ENCODE measurements at regions of chr9 and their contacts with region 1.

Region 1: GRCh38 chr9:33167046-33167808 is at the start of gene B4GALT1:
- DNase-seq: peak; percentile 81 to 97 (median 90)
- ATAC-seq: peak; percentile 86
- H3K4me3 ChIP-seq: peak within 1 kb of the TSS; percentile 68
- H3K4me3 Mint-ChIP-seq: peak within 1 kb of the TSS; percentile 87 to 97 (median 95)
- H3K27ac ChIP-seq: peak within 1 kb of the TSS; percentile 91
- H3K27ac Mint-ChIP-seq: peak within 1 kb of the TSS; percentile 91 to 100 (median 99)
- H3K4me1 ChIP-seq: peaks cover 43 to 45% of the 10 kb centered on the region in 2 donors
- H3K4me1 Mint-ChIP-seq: peaks cover 47 to 69% (median 64%) of the 10 kb centered on the region in 7 donors
- H3K27me3 ChIP-seq: no peaks in the 10 kb centered on the region
- H3K27me3 Mint-ChIP-seq: no peaks in the 10 kb centered on the region
- total RNA-seq, gene B4GALT1: 40.7 to 86.2 (median 45.6) TPM

Region 2: DNA sequence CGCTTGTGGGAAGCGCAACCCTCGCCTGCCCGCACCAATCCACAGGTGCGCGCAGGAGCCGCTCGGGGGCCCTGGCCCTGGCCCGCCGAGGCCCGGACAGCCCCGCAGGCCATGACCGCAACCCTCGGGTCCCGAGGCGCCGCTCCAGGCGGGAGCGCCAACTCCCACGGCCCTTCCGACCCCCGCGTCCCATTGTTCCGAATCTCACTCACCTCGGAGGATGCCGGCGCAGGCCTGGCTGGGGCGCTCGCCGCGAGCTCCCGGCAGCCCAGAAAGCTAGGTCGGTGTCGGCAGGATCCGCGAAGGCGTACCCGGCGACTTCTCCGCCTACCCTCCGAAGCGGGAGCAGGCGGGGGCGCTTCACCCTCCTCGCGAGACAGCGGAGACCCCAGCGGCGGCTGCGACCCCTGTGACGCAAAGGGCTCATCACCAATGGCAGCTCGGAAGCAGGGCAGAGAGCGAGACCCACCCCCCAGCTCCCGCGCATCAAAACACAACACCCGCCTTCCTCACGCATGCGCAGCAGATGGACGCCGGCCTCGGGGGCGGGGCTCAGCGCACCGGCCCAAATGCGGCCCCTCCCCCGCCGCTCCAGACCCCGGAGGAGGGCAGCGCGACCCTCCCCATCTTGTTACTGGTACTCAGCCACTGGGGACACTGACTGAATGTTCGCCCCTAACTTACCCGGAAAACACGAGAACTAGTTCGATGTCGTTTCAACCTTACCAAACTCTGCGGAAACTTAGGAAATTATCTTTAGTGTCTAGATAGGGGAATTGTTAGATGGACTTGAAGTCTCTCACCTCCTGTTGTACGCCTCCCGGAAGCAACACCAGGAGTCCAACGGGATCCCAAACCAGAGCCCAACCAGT is 616.4 kb before region 1 on chr9:
- CTCF ChIA-PET with region 1: no interaction called
- POLR2A ChIA-PET with region 1: no interaction called
- intact Hi-C with region 1: loop called in 1 of 2 experiments (anchors 1 kb)
- DNase-seq: peak; percentile 89 to 99 (median 96)
- ATAC-seq: peak; percentile 90
- H3K4me3 ChIP-seq: peak overlapping the region; percentile 93
- H3K4me3 Mint-ChIP-seq: peak overlapping the region; percentile 92 to 100 (median 99)
- H3K27ac ChIP-seq: peak overlapping the region; percentile 97
- H3K27ac Mint-ChIP-seq: peak overlapping the region; percentile 96 to 100 (median 98)
- H3K4me1 ChIP-seq: peaks cover 13 to 20% of the 10 kb centered on the region in 2 donors
- H3K4me1 Mint-ChIP-seq: peaks cover 31 to 70% (median 56%) of the 10 kb centered on the region in 7 donors
- H3K27me3 ChIP-seq: no peaks in the 10 kb centered on the region
- H3K27me3 Mint-ChIP-seq: no peaks in the 10 kb centered on the region

Region 3: GRCh38 chr9:32866273-32866672 is 301.0 kb before region 1 on chr9:
- CTCF ChIA-PET with region 1: no interaction called
- POLR2A ChIA-PET with region 1: no interaction called
- intact Hi-C with region 1: no loop called
- DNase-seq: no peak
- ATAC-seq: no peak
- H3K4me3 ChIP-seq: no peak overlapping the region
- H3K4me3 Mint-ChIP-seq: no peak overlapping the region
- H3K27ac ChIP-seq: no peak overlapping the region
- H3K27ac Mint-ChIP-seq: no peak overlapping the region
- H3K4me1 ChIP-seq: no peaks in the 10 kb centered on the region
- H3K4me1 Mint-ChIP-seq: no peaks in the 10 kb centered on the region
- H3K27me3 ChIP-seq: no peaks in the 10 kb centered on the region
- H3K27me3 Mint-ChIP-seq: peaks cover 0 to 19% (median 5%) of the 10 kb centered on the region in 5 donors

Region 4: DNA sequence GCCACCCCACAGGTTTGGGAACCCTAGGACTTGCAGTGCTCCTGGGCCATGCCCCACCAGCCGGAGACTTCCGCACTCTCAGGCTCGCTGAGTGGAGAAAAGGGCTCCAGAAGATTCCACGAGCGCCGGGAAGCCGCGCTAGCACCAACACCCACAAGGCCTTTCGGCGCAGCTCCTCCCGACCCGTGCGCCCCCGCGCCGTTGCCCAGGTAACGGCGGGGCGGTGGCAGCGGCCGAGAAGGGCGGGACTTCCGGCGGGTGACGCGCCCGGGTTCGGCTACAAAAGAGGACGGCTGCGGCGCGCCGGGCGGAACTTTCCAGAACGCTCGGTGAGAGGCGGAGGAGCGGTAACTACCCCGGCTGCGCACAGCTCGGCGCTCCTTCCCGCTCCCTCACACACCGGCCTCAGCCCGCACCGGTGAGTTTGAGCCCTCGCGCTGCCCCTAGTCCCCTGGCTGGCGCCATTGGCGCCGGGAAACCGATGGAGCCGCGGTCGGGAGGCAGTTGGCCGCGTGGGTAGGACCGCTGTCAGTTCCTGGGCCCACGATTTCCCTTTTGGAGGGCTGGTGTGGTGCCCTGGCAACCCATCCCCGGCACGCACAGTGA is 142.2 kb before region 1 on chr9 and contains the start of gene DNAJA1:
- CTCF ChIA-PET with region 1: no interaction called
- POLR2A ChIA-PET with region 1: interaction called, 5 read pairs
- intact Hi-C with region 1: loop called (anchors 1 to 2 kb)
- DNase-seq: peak; percentile 92 to 99 (median 97)
- ATAC-seq: peak; percentile 91
- H3K4me3 ChIP-seq: peak within 1 kb of the TSS; percentile 98
- H3K4me3 Mint-ChIP-seq: peak within 1 kb of the TSS; percentile 91 to 99 (median 96)
- H3K27ac ChIP-seq: peak within 1 kb of the TSS; percentile 100
- H3K27ac Mint-ChIP-seq: peak within 1 kb of the TSS; percentile 82 to 98 (median 95)
- H3K4me1 ChIP-seq: peaks cover 37 to 49% of the 10 kb centered on the region in 2 donors
- H3K4me1 Mint-ChIP-seq: peaks cover 51 to 83% (median 78%) of the 10 kb centered on the region in 7 donors
- H3K27me3 ChIP-seq: no peaks in the 10 kb centered on the region
- H3K27me3 Mint-ChIP-seq: no peaks in the 10 kb centered on the region
- total RNA-seq, gene DNAJA1: 66.8 to 204 (median 119) TPM

Region 5: DNA sequence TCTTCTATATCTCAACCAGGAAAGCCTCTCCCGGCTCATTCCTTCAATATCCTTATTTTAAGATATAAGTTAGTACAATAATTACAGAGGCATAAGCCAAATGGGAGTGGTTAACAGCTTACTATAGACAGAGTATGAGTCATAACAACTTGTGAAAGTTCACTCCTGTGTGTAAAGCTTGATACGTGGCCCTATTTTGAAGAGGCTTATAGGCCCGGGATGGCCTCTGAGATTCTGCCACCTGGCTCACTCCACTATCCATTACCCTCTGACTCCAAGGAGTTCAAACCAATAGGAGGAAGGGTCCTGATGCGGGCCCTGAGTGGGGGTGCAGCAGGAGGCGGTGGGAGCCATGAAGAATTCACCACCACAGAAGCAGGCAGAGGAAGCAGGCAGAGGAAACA is 36.7 kb before region 1 on chr9:
- CTCF ChIA-PET with region 1: no interaction called
- POLR2A ChIA-PET with region 1: interaction called, 20 read pairs
- intact Hi-C with region 1: loop called in 1 of 2 experiments (anchors 1 kb)
- DNase-seq: no peak
- ATAC-seq: peak; percentile 77
- H3K4me3 ChIP-seq: no peak overlapping the region
- H3K4me3 Mint-ChIP-seq: peak overlapping the region in 2 of 10 donors; percentile 46 to 61
- H3K27ac ChIP-seq: no peak overlapping the region
- H3K27ac Mint-ChIP-seq: peak overlapping the region in 8 of 9 donors; percentile 35 to 92 (median 78)
- H3K4me1 ChIP-seq: peaks cover 0 to 4% of the 10 kb centered on the region in 2 donors
- H3K4me1 Mint-ChIP-seq: peaks cover 10 to 41% (median 39%) of the 10 kb centered on the region in 7 donors
- H3K27me3 ChIP-seq: no peaks in the 10 kb centered on the region
- H3K27me3 Mint-ChIP-seq: no peaks in the 10 kb centered on the region

Region 6: DNA sequence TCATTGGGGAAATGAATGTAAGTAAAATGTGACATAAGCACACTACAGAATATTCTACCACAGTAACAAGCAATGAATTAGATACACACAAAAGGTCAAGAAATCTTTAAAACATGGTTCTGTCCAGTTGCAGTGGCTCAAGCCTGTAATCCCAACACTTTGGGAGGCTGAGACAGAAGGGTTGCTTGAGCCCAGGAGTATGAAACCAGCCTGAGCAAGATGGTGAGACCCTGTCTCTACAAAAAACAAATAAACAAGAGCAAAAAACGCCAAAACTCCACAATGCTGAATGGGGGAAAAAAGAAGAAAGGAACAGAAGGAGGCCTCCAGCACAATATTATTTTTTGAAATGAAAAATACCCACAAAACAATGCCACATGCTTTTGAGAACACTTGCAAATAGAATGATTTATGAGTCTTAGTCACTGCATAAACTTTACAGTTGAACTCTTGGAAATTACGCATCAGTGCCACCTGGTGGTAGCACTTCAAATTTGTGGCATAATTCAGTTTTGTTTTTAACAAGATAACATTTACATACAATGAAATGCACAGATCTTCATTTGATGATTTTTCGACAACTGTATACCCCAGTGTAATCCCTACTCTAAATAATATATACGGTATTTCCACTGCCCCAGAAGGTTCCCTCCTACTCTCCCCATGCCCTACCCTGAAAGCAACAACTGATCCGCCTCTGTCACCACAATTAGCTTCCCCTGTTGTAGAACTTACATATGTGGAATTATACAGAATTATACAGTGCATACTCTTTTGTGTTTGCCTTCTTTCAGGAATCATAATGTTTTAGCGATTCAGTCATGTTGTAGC is 58.3 kb after region 1 on chr9:
- CTCF ChIA-PET with region 1: interaction called, 9 read pairs
- POLR2A ChIA-PET with region 1: interaction called, 3 read pairs
- intact Hi-C with region 1: loop called (anchors 1 kb)
- DNase-seq: peak; percentile 36 to 73 (median 65)
- ATAC-seq: peak; percentile 76
- H3K4me3 ChIP-seq: no peak overlapping the region
- H3K4me3 Mint-ChIP-seq: no peak overlapping the region
- H3K27ac ChIP-seq: no peak overlapping the region
- H3K27ac Mint-ChIP-seq: peak overlapping the region in 3 of 9 donors; percentile 14 to 68 (median 25)
- H3K4me1 ChIP-seq: peaks cover 0 to 3% of the 10 kb centered on the region in 2 donors
- H3K4me1 Mint-ChIP-seq: peaks cover 10 to 35% (median 18%) of the 10 kb centered on the region in 7 donors
- H3K27me3 ChIP-seq: no peaks in the 10 kb centered on the region
- H3K27me3 Mint-ChIP-seq: peaks cover 0 to 6% (median 0%) of the 10 kb centered on the region in 5 donors

Region 7: DNA sequence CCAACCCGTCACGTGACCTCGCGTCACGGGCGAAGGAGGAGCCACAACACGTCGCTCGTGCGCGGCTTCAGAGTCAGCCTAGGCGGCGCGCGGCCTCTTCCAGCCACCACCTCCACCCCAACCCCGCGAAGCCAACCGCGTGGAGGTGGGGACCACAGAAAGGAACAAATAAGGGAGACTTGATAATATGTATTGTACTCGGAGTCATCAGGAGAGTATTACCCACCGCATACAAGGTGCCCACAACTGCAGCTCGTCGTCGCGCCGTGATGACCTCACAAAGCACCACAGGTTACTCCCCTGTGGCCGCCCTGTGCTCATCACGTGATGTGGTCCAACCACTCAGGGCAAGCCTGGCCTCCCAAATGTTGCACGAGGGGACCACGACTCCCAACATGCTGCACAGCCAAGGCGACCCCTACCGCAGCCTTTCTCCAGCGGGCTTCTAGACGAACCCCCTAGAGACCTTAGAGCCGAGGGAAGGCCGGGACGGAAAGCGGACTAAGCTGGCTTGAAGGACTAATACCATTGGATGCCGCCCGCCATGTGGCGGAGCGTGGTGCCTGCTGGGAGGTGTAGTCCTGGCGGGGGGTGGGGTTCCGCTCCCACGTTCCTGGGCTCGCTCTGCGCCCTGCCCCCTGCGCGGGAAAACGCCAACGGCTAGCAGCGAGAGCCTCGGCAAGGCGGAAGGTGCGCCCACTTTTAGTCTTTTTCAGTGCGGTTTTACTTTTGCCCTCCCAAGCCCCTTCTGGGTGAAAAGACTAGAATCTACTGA is 881.9 kb after region 1 on chr9:
- CTCF ChIA-PET with region 1: no interaction called
- POLR2A ChIA-PET with region 1: no interaction called
- intact Hi-C with region 1: loop called in 1 of 2 experiments (anchors 5 kb)
- DNase-seq: peak; percentile 96 to 99 (median 97)
- ATAC-seq: peak; percentile 93
- H3K4me3 ChIP-seq: peak overlapping the region; percentile 98
- H3K4me3 Mint-ChIP-seq: peak overlapping the region; percentile 96 to 100 (median 98)
- H3K27ac ChIP-seq: peak overlapping the region; percentile 86
- H3K27ac Mint-ChIP-seq: peak overlapping the region; percentile 98 to 100 (median 99)
- H3K4me1 ChIP-seq: peaks cover 11 to 22% of the 10 kb centered on the region in 2 donors
- H3K4me1 Mint-ChIP-seq: peaks cover 25 to 55% (median 31%) of the 10 kb centered on the region in 7 donors
- H3K27me3 ChIP-seq: no peaks in the 10 kb centered on the region
- H3K27me3 Mint-ChIP-seq: peaks cover 0 to 4% (median 0%) of the 10 kb centered on the region in 5 donors